ENCODE measurements at regions of chr15 and their contacts with region 1.

Region 1: DNA sequence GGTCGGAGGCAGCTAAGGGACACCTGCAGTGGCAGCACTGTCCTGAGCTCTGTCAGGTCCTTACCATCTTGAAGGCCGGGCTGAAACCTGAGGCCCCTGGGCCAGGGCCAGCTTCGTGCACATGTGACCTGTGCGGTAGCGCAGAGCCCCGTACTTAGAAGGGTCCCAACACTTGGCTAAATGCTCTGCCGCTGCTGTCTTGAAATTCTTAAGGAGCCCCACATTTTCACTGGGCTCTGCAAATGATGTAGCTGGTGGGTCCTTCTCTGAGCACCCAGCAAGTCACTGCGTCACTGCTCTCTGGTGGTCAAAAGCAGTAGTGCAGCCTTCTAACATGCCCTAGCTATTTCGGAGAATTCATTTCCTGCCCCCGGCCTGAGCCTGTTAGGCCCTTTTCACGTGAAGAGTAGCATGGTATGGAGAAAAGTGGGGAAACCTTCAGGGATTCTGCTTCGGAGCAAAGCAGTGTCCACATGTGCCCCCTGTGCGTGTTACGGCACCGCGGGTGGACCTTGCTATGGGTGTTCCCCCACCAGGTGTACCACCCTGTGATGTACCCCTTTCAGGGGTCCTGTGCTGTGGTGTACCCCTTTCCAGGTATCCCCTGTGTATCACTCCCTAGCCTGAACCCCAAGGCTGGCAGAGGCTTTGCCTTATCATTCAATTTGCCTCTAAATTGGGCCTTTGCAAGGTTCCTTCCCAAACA is 79.7 kb downstream of the TMEM266 start:
- DNase-seq: peak; percentile 65 to 69
- H3K4me3 ChIP-seq: no peak overlapping the region
- H3K27ac ChIP-seq: no peak overlapping the region
- H3K4me1 ChIP-seq: peaks cover 0 to 7% of the 10 kb centered on the region in 2 donors
- H3K27me3 ChIP-seq: no peaks in the 10 kb centered on the region
- CTCF ChIP-seq: peak; percentile 64 to 93 (median 79)
- POLR2A ChIP-seq: no peak

Region 2: DNA sequence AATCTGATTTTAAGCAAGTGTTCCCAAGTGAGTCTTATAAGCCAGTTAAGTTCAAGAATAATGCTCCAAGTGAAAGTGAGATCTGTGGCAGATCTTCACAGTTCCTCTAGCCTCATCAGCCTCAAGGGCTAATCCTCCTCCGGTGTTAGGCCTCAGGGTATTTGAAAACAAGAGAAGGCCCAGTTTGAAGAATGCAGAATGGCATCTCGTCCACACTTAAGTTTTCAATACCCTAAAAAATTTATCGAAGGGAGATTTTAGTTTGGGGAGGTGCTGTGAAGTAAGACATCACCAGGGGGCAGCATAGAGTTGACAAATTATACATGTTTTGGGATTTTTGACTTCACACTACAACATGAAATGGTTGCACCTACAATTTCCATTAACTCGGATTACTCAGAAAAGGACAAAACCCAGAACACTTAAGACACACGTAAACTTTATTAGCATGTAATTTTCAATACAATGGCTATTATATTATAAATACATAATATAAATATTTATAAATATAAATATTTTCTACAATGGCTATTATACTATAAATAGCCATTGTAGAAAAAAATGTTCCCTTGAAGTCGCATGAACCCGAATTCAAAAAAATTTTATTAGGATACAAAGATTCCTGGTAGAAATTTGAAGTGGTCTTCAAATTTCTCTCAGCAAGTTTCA is 82.1 kb before region 1 on chr15:
- intact Hi-C with region 1: loop called (anchors 5 kb)
- DNase-seq: peak; percentile 12 to 18
- H3K4me3 ChIP-seq: no peak overlapping the region
- H3K27ac ChIP-seq: no peak overlapping the region
- H3K4me1 ChIP-seq: peaks cover 4 to 20% of the 10 kb centered on the region in 2 donors
- H3K27me3 ChIP-seq: no peaks in the 10 kb centered on the region
- CTCF ChIP-seq: peak; percentile 33 to 78 (median 54)
- POLR2A ChIP-seq: no peak